Mammary epithelial cell (primary cell): ENCODE measurements at regions of chr7 and their contacts with region 1.

Region 1: GRCh38 chr7:150404805-150405583 is 25.9 kb downstream of the ZNF775 start:
- DNase-seq: peak; percentile 70
- H3K4me3 ChIP-seq: peak overlapping the region; percentile 39 to 73 (median 54)
- H3K27ac ChIP-seq: no peak overlapping the region
- H3K4me1 ChIP-seq: peaks cover 12% of the 10 kb centered on the region
- H3K27me3 ChIP-seq: no peaks in the 10 kb centered on the region
- CTCF ChIP-seq: peak in 1 of 2 donors; percentile 33

Region 2: GRCh38 chr7:150363872-150364271 is 41.1 kb before region 1 on chr7:
- CTCF ChIA-PET with region 1: no interaction called
- dilution Hi-C with region 1: no loop called
- in situ Hi-C with region 1: no loop called
- intact Hi-C with region 1: loop called (anchors 5 kb)
- DNase-seq: no peak
- H3K4me3 ChIP-seq: no peak overlapping the region
- H3K27ac ChIP-seq: no peak overlapping the region
- H3K4me1 ChIP-seq: peaks cover 10% of the 10 kb centered on the region
- H3K27me3 ChIP-seq: no peaks in the 10 kb centered on the region
- CTCF ChIP-seq: no peak

Region 3: DNA sequence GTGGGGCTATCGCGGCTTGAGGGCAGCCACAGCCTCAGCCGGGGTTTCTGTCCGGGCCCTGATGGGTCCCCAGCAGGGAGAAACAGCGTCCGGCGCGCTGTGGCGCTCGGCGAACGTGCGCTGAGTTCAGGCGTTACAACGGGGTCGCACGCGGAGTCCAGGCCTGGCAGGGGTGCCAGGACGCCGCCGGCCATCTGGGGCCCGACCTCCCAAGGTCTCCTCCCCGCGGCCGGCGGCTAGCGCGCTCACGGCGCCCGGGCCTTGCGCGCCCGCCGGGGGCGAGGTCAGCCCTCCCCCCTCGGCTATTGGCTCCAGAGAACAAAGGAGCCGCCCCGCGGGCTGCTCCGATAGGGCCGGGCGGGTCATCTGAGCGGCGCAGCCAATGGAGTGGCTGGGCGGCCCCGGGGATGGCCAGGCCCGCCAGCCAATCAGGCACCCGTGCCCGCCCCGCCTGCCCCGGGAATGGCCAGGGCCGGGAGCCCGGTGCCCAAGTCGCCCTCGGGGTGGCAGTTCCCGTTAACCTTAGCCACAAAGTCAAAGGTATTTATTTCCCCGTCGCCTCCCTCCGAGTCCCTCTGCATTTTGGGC is 26.0 kb before region 1 on chr7 and contains the start of gene ZNF775:
- CTCF ChIA-PET with region 1: no interaction called
- dilution Hi-C with region 1: no loop called
- in situ Hi-C with region 1: no loop called
- intact Hi-C with region 1: loop called (anchors 2 kb)
- DNase-seq: peak; percentile 91
- H3K4me3 ChIP-seq: peak within 1 kb of the TSS; percentile 74 to 76 (median 75)
- H3K27ac ChIP-seq: peak within 1 kb of the TSS; percentile 24
- H3K4me1 ChIP-seq: peaks cover 28% of the 10 kb centered on the region
- H3K27me3 ChIP-seq: no peaks in the 10 kb centered on the region
- CTCF ChIP-seq: no peak
- total RNA-seq, gene ZNF775: 2.0 to 2.3 TPM

Region 4: DNA sequence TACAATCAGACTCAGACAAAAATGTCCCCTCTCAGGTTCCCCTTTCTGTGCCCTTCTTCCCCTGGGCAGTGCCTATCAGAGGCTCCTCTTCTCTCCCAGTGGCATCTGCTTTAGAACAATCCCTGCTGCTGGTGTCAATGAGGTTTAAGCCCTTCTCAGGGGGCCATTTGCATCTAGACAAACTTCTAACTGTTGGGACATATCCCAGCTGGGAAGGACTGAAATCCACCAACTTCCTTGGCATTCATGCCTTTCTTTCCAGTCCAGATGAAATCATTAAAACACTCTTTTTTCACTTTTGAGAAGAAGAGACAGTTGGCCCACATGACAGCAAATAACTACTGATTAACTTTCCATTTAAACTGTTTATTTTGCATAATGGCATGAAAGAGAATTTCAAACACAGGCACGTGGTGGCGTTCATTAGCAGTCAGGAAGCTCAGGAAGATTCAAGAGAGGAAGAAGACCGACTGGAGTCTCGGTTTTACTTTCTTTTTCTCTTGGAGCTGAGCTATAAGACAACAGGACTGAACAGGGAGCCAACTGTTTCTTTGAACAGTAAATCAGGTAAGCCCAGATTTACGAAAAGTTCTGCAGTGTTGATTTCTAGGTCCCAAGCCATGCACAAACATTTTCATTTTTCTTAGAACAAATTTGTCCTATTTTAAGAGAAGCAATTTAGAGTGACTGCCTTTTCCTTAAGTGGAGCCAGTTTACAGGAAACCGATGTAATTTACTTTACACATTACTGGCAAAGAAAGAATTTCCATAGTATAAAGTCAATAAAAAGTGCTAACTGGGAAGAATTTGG is 280.4 kb after region 1 on chr7 and contains the start of gene GIMAP2:
- CTCF ChIA-PET with region 1: no interaction called
- dilution Hi-C with region 1: no loop called
- in situ Hi-C with region 1: no loop called
- intact Hi-C with region 1: no loop called
- DNase-seq: peak; percentile 43
- H3K4me3 ChIP-seq: peak within 1 kb of the TSS in 2 of 3 experiments; percentile 17 to 34
- H3K27ac ChIP-seq: no peak within 1 kb of the TSS
- H3K4me1 ChIP-seq: peaks cover 3% of the 10 kb centered on the region
- H3K27me3 ChIP-seq: no peaks in the 10 kb centered on the region
- CTCF ChIP-seq: no peak
- total RNA-seq, gene GIMAP2: 1.3 to 1.4 TPM